Activated CD4-positive, alpha-beta memory T cell treated with anti-CD3 and anti-CD28 coated beads for 36 hours (primary cell): ENCODE measurements at regions of chr17 and their contacts with region 1.

Region 1: GRCh38 chr17:16363749-16364536 is 10.7 kb upstream of the CENPV start:
- DNase-seq: peak; percentile 86
- H3K4me3 Mint-ChIP-seq: no peak overlapping the region
- H3K27ac Mint-ChIP-seq: no peak overlapping the region
- H3K4me1 Mint-ChIP-seq: peaks cover 7% of the 10 kb centered on the region
- H3K27me3 Mint-ChIP-seq: no peaks in the 10 kb centered on the region

Region 2: DNA sequence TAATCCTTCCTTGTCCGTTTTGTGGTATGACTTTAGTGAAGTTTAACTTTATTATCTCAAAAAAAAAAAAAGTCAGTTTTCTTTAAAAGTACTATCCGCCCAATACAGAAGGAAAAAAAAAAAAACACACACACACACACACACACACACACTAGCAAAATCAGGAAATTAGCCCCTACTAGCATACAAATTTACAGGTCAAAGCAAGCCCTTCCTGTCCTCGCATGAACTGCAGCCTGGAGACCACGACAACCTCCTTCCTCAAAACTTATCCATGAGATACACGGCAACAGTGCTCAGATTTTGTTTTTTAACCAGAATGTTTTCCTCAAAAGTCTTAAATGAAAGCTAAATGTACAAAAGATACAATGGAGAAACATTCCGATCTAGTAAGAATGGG is 164.8 kb before region 1 on chr17:
- CTCF ChIA-PET with region 1: no interaction called
- POLR2A ChIA-PET with region 1: no interaction called
- intact Hi-C with region 1: no loop called
- DNase-seq: no peak
- H3K4me3 Mint-ChIP-seq: no peak overlapping the region
- H3K27ac Mint-ChIP-seq: peak overlapping the region; percentile 39
- H3K4me1 Mint-ChIP-seq: peaks cover 54% of the 10 kb centered on the region
- H3K27me3 Mint-ChIP-seq: no peaks in the 10 kb centered on the region

Region 3: GRCh38 chr17:16353317-16354174 is 10.4 kb before region 1 on chr17 and contains the start of gene CENPV:
- CTCF ChIA-PET with region 1: interaction called, 55 read pairs
- POLR2A ChIA-PET with region 1: interaction called, 4 read pairs
- intact Hi-C with region 1: no loop called
- DNase-seq: peak; percentile 69
- H3K4me3 Mint-ChIP-seq: peak within 1 kb of the TSS; percentile 87
- H3K27ac Mint-ChIP-seq: peak within 1 kb of the TSS; percentile 28
- H3K4me1 Mint-ChIP-seq: peaks cover 22% of the 10 kb centered on the region
- H3K27me3 Mint-ChIP-seq: no peaks in the 10 kb centered on the region
- total RNA-seq, gene CENPV: 43.0 to 44.2 TPM

Region 4: DNA sequence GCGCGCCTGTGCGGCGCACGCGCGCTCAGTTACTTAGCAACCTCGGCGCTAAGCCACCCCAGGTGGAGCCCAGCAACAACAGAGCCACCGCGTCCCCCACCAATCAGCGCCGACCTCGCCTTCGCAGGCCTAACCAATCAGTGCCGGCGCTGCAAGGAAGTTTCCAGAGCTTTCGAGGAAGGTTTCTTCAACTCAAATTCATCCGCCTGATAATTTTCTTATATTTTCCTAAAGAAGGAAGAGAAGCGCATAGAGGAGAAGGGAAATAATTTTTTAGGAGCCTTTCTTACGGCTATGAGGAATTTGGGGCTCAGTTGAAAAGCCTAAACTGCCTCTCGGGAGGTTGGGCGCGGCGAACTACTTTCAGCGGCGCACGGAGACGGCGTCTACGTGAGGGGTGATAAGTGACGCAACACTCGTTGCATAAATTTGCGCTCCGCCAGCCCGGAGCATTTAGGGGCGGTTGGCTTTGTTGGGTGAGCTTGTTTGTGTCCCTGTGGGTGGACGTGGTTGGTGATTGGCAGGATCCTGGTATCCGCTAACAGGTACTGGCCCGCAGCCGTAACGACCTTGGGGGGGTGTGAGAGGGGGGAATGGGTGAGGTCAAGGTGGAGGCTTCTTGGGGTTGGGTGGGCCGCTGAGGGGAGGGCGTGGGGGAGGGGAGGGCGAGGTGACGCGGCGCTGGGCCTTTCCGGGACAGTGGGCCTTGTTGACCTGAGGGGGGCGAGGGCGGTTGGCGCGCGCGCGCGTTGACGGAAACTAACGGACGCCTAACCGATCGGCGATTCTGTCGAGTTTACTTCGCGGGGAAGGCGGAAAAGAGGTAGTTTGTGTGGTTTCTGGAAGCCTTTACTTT is 16.9 kb after region 1 on chr17 and contains the start of gene UBB:
- CTCF ChIA-PET with region 1: interaction called, 73 read pairs
- POLR2A ChIA-PET with region 1: interaction called, 4 read pairs
- intact Hi-C with region 1: no loop called
- DNase-seq: peak; percentile 98
- H3K4me3 Mint-ChIP-seq: peak within 1 kb of the TSS; percentile 93
- H3K27ac Mint-ChIP-seq: peak within 1 kb of the TSS; percentile 99
- H3K4me1 Mint-ChIP-seq: peaks cover 40% of the 10 kb centered on the region
- H3K27me3 Mint-ChIP-seq: no peaks in the 10 kb centered on the region
- total RNA-seq, gene UBB: 1,695 to 1,771 TPM

Region 5: GRCh38 chr17:16449121-16449570 is 85.2 kb after region 1 on chr17:
- CTCF ChIA-PET with region 1: interaction called, 22 read pairs
- POLR2A ChIA-PET with region 1: no interaction called
- intact Hi-C with region 1: no loop called
- DNase-seq: peak; percentile 29
- H3K4me3 Mint-ChIP-seq: no peak overlapping the region
- H3K27ac Mint-ChIP-seq: no peak overlapping the region
- H3K4me1 Mint-ChIP-seq: peaks cover 42% of the 10 kb centered on the region
- H3K27me3 Mint-ChIP-seq: no peaks in the 10 kb centered on the region